ENCODE measurements at regions of chr7 and their contacts with region 1.

Region 1: GRCh38 chr7:138002096-138002827 is 376 bp upstream of the CREB3L2 start:
- DNase-seq: peak; percentile 99 to 100 (median 99)
- H3K4me3 ChIP-seq: peak overlapping the region; percentile 66 to 95 (median 89)
- H3K4me3 Mint-ChIP-seq: peak overlapping the region; percentile 97
- H3K27ac ChIP-seq: peak overlapping the region; percentile 72 to 95
- H3K27ac Mint-ChIP-seq: peak overlapping the region; percentile 92 to 96 (median 96)
- H3K4me1 ChIP-seq: peaks cover 16 to 25% of the 10 kb centered on the region in 2 donors
- H3K4me1 Mint-ChIP-seq: peaks cover 40% of the 10 kb centered on the region
- H3K27me3 ChIP-seq: no peaks in the 10 kb centered on the region
- H3K27me3 Mint-ChIP-seq: no peaks in the 10 kb centered on the region
- CTCF ChIP-seq: peak; percentile 98

Region 2: GRCh38 chr7:137903382-137904169 is 98.7 kb before region 1 on chr7:
- intact Hi-C with region 1: no loop called
- DNase-seq: peak; percentile 73 to 83 (median 79)
- H3K4me3 ChIP-seq: no peak overlapping the region
- H3K4me3 Mint-ChIP-seq: no peak overlapping the region
- H3K27ac ChIP-seq: peak overlapping the region in 1 of 2 donors; percentile 18
- H3K27ac Mint-ChIP-seq: peak overlapping the region in 5 of 7 donors; percentile 46 to 75 (median 60)
- H3K4me1 ChIP-seq: peaks cover 11 to 23% of the 10 kb centered on the region in 2 donors
- H3K4me1 Mint-ChIP-seq: peaks cover 22% of the 10 kb centered on the region
- H3K27me3 ChIP-seq: no peaks in the 10 kb centered on the region
- H3K27me3 Mint-ChIP-seq: peaks cover 0 to 3% (median 0%) of the 10 kb centered on the region in 3 donors
- CTCF ChIP-seq: peak; percentile 87

Region 3: GRCh38 chr7:137943147-137943551 is 59.1 kb before region 1 on chr7:
- intact Hi-C with region 1: loop called in 1 of 2 experiments (anchors 10 kb)
- DNase-seq: no peak
- H3K4me3 ChIP-seq: no peak overlapping the region
- H3K4me3 Mint-ChIP-seq: no peak overlapping the region
- H3K27ac ChIP-seq: no peak overlapping the region
- H3K27ac Mint-ChIP-seq: no peak overlapping the region
- H3K4me1 ChIP-seq: no peaks in the 10 kb centered on the region
- H3K4me1 Mint-ChIP-seq: peaks cover 11% of the 10 kb centered on the region
- H3K27me3 ChIP-seq: no peaks in the 10 kb centered on the region
- H3K27me3 Mint-ChIP-seq: peaks cover 0 to 2% (median 0%) of the 10 kb centered on the region in 3 donors
- CTCF ChIP-seq: no peak

Region 4: DNA sequence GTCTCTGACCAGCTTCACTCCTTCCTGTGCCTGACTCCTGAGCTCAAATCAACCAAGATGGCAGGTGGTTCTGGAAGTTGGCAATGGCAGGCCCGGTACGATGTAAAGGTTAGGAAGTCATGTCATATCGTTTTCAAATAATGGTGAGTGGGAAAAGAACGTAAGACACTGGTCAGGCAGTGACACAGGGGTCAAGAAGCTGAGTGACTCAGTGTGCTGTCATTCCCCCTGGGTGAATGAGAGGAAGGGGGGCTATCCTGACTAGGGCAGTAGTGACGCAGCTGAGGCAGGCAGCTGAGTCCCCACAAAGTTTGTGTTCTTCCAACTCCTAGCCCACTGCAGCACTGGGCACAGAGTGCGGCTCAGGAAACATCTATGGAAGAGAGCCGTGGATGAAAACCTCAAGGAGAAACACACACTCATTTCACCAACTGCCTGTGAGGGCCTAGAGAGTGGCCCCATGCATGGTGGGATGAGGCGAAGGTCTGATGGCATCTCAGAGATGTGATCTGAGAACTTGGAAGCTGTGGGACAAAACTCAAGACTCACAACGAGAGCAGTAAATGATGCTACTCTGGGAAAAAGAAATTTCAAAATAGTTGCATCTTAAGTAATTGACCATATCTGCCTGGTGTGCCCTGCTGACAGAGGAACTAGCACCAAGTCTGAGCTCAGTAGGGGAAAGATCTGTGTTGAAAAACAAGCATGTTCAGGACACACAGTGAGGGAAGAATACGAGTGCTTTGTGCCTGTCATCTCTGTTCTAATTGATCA is 23.6 kb before region 1 on chr7:
- intact Hi-C with region 1: no loop called
- DNase-seq: peak in 1 of 3 donors; percentile 23
- H3K4me3 ChIP-seq: no peak overlapping the region
- H3K4me3 Mint-ChIP-seq: no peak overlapping the region
- H3K27ac ChIP-seq: no peak overlapping the region
- H3K27ac Mint-ChIP-seq: peak overlapping the region in 4 of 7 donors; percentile 11 to 69 (median 52)
- H3K4me1 ChIP-seq: peaks cover 9 to 10% of the 10 kb centered on the region in 2 donors
- H3K4me1 Mint-ChIP-seq: peaks cover 30% of the 10 kb centered on the region
- H3K27me3 ChIP-seq: no peaks in the 10 kb centered on the region
- H3K27me3 Mint-ChIP-seq: peaks cover 0 to 3% (median 0%) of the 10 kb centered on the region in 3 donors
- CTCF ChIP-seq: no peak

Region 5: DNA sequence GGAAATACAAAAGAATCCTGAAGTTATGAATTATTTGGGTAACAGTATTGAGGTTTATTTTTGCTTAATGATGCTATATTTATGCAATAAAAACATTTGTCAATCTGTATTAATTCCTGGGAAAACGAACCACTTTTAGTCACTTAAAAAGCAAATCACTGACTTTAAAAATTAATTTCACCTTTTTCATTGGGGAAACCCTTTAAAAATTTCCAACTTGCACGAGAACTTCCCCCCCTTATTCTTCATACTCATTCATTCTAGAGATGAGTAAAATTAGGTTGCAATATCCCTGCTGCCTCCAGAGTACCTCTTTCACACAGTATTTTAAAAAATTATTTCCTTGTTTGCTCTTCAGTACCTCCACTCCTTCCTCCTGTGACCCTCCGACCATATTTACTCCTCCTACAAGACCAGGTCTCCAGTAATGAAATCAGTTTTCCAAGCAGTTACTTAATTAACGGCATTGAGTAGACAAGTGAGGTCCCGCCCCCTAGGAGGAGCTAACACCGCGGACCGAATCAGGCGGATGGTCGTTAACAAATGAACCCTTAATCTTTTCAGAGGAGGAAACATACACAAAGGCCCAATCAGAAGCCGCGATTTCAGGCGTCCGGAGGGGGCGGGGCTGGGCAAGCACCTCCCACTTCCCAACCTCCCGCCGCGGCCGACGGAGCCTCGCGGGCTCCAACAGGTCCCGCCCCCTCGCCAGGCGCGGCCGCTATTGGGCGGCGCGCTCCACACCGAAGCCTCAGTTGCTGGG is 457.3 kb after region 1 on chr7:
- intact Hi-C with region 1: loop called in 1 of 2 experiments (anchors 10 kb)
- DNase-seq: peak; percentile 96 to 98 (median 97)
- H3K4me3 ChIP-seq: peak overlapping the region; percentile 39 to 80 (median 80)
- H3K4me3 Mint-ChIP-seq: peak overlapping the region; percentile 96
- H3K27ac ChIP-seq: peak overlapping the region; percentile 16 to 77
- H3K27ac Mint-ChIP-seq: peak overlapping the region; percentile 85 to 96 (median 90)
- H3K4me1 ChIP-seq: peaks cover 13 to 16% of the 10 kb centered on the region in 2 donors
- H3K4me1 Mint-ChIP-seq: peaks cover 32% of the 10 kb centered on the region
- H3K27me3 ChIP-seq: no peaks in the 10 kb centered on the region
- H3K27me3 Mint-ChIP-seq: peaks cover 0 to 1% (median 0%) of the 10 kb centered on the region in 3 donors
- CTCF ChIP-seq: no peak

Measured in CD14-positive monocyte (primary cell).